Pancreas (tissue), 10 donors: ENCODE measurements at regions of chr15 and their contacts with region 1.

Region 1: DNA sequence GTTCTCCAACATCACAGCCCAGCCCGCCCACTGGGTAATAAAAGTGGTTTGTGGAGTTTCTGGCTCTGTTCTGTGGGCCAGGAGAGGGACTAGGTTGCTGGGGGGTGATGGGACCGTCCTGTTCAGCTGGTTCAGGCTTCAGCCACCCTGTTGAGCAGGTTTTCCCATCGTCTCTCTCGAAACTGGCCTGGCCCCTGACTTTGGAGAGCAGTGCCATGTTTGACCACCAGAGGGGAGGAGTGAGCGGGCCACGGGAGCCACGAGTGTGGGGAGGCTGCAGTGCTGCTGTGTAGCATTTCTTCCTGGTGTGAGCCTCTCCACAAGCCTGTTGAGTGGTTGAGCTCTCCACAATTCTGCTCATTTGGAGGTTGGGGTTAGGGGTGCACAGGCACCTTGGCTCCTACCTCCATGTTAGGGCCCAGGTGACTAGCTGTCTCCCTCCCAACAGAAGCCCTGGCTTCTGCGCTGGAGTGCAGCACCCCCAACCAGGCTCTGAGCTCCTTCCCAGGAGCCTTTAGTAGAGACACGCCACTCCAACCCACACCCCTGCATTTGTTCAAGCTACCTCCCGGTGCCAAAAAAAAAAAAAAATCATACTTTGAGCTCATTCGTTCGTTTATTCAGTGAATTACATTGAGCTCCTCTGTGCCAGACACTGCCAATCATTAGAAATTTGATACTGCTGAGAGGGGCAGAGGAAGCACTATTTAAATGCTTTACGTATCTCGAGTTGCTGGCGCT is 13.9 kb downstream of the SPINT1 start:
- DNase-seq: peak; percentile 77 to 94 (median 90)
- ATAC-seq: peak; percentile 83 to 91 (median 89)
- H3K4me3 ChIP-seq: no peak overlapping the region
- H3K27ac ChIP-seq: peak overlapping the region in 3 of 4 donors; percentile 18 to 62 (median 55)
- H3K4me1 ChIP-seq: peaks cover 6 to 28% (median 8%) of the 10 kb centered on the region in 3 donors
- H3K27me3 ChIP-seq: no peaks in the 10 kb centered on the region
- CTCF ChIP-seq: peak; percentile 93 to 98 (median 94)

Region 2: GRCh38 chr15:40182358-40183029 is 675.3 kb before region 1 on chr15:
- intact Hi-C with region 1: no loop called
- DNase-seq: no peak
- ATAC-seq: no peak
- H3K4me3 ChIP-seq: no peak overlapping the region
- H3K27ac ChIP-seq: no peak overlapping the region
- H3K4me1 ChIP-seq: no peaks in the 10 kb centered on the region
- H3K27me3 ChIP-seq: no peaks in the 10 kb centered on the region
- CTCF ChIP-seq: no peak

Region 3: GRCh38 chr15:40528801-40529200 is 329.0 kb before region 1 on chr15:
- intact Hi-C with region 1: no loop called
- DNase-seq: no peak
- ATAC-seq: no peak
- H3K4me3 ChIP-seq: no peak overlapping the region
- H3K27ac ChIP-seq: no peak overlapping the region
- H3K4me1 ChIP-seq: no peaks in the 10 kb centered on the region
- H3K27me3 ChIP-seq: no peaks in the 10 kb centered on the region
- CTCF ChIP-seq: no peak

Region 4: DNA sequence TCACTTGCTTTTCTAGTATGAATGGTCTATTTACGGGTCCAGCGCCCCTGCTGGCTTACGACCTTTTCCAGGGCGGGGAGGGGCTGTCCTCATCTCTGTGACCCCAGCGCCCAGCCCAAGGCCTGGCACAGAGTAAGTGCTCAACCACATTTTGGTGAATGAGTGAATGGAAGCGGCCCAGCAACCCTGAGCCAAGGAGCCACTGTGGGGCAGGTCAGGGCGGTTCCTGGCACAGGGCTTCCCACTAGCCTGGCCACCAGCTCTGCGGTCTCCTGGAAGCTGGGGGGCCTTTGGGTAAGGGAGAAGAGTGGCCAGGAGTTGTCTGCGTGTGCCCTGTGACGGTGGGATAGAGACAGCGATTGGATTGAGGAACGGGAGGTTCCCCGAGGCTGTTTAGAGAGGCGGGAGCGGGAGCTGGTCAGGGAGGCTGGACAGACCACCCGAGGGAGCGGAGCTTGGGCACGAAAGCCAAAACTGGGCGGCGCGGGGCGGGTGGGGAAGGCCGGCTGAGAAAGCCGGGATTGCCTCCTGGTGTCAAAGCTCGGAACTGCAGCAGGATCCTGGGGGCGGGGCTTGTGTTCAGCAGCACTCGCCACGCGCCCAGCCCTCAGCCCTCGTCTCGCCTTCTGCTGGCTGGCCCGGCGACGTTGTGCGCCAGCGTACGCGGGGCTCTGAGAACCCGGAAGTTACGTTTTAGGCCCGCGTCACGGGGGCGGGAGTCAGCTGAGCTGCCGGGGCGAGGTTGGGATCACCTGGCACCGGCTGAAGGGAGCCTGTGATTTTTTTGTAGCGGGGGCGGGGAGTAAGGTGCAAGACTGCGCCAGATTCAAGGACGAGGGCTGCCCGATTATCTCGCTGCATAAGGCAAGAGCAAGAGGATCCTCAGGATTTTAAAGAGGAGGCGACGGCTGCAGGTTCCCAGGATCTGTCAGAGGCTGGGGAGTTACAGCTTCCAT is 36.2 kb after region 1 on chr15 and contains the start of gene VPS18:
- intact Hi-C with region 1: loop called in 1 of 3 experiments (anchors 5 kb)
- DNase-seq: peak; percentile 98 to 99 (median 98)
- ATAC-seq: peak; percentile 94 to 98 (median 97)
- H3K4me3 ChIP-seq: peak within 1 kb of the TSS; percentile 44 to 85 (median 76)
- H3K27ac ChIP-seq: peak within 1 kb of the TSS; percentile 56 to 85 (median 78)
- H3K4me1 ChIP-seq: peaks cover 0 to 7% (median 0%) of the 10 kb centered on the region in 3 donors
- H3K27me3 ChIP-seq: no peaks in the 10 kb centered on the region
- CTCF ChIP-seq: peak; percentile 95 to 99 (median 98)
- total RNA-seq, gene VPS18: 4.4 to 12.5 (median 6.5) TPM

Region 5: DNA sequence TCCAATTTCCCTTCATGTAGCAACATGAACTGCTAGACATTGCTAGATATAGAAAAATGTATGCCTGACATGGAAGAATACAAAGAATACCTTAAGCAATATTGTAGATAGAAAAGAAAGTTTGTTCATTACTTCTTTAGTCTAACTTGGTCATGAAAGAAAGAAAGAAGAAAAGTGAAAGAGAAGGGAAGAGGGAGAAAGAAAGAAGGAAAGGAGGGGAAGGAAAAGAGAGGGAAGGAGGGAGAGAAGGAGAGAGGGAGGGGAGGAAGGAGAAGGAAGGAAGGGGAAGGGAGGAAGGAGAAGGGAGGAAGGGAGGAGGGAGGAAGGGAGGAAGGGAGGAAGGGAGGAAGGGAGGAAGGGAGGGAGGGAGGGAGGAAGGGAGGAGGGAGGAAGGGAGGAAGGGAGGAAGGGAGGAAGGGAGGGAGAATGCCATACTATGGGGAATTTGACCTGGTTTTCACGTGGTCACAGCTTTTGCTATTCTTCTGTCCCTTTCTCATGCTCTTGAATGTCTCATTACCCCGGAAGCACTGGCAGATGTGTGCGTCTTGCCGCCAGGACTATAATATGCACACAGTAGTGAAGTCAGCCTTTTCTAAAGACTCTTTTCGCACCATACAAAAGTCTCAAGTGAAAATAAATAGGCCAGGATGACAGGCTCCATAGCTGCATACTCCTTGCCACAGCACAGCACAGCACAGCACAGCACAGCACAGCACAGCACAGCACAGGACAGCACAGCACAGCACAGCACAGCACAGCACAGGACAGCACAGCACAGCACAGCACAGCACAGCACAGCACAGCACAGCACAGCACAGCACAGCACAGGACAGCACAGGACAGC is 173.7 kb after region 1 on chr15:
- intact Hi-C with region 1: no loop called
- DNase-seq: no peak
- ATAC-seq: no peak
- H3K4me3 ChIP-seq: no peak overlapping the region
- H3K27ac ChIP-seq: no peak overlapping the region
- H3K4me1 ChIP-seq: no peaks in the 10 kb centered on the region
- H3K27me3 ChIP-seq: no peaks in the 10 kb centered on the region
- CTCF ChIP-seq: no peak